ENCODE measurements at regions of chr2 and their contacts with region 1.

Region 1: DNA sequence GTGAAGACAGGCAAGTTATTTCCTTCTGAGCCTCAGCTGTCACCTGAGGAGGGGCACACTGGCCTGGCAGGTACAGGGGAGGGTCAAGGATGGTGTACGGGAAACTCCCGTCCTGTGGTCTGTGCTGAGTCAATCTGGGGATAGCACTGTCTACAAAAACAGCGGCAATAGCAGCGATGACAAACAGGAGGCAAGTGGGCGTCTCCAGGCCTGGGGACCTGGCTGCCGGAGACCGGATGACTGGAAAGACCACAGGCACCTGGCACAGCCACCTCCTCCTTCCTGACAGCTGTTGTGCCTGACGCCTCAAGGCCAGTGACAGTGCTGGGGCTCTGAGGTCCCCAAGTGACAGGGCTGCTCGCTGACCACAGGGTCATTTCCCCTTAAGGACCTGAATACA is 202.1 kb upstream of the HS6ST1 start:
- DNase-seq: peak; percentile 82
- H3K4me3 Mint-ChIP-seq: no peak overlapping the region
- H3K27ac Mint-ChIP-seq: peak overlapping the region; percentile 53
- H3K4me1 Mint-ChIP-seq: peaks cover 14% of the 10 kb centered on the region
- H3K27me3 Mint-ChIP-seq: peaks cover 2% of the 10 kb centered on the region

Region 2: DNA sequence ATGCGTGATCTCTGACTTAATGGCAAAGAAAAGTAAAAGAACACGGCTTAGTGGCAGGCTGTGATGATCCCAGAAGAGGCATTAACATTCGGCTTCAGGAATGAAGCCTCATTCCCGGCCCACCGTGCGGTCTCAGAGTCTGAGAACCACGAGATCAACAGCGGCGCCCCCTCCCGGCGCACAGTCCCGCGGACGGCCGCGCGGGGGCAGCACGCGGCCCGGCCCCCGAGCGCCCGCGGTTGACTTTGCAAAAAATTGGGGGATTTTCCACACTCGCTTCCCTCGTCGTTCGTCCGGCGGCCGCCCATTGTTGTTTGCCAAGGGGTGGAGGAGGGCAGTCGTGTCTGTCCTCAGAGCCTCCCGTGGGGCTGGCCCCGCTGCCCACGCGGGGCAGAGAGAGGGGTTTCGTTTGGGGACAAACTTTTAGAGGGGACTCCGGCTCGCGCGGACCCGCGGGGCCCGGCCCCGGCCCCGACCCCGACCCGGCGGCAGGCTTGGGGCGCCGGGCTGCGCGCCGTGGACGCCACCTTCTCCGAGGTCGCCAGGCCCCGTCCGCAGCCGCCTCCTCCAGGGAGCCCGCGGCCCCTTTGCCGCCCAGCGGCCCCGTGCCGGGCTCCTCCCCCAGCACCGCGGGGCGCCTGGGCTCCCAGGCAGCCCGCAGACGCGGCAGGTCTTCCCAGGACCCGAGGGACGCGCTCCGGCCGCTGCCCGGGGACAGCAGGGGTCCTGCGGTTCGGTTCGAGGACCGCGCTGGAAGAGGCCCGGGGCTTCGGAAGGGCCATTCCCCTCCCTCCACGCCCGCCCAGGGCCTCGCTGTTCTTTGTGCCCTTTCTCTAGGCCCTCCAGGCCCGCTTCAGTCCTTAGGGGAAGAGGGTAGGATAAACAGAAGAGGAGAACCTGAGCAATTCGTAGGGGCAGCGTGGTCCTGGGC is 198.7 kb before region 1 on chr2:
- intact Hi-C with region 1: loop called (anchors 5 kb)
- DNase-seq: peak; percentile 95
- H3K4me3 Mint-ChIP-seq: peak overlapping the region; percentile 64
- H3K27ac Mint-ChIP-seq: peak overlapping the region; percentile 80
- H3K4me1 Mint-ChIP-seq: peaks cover 11% of the 10 kb centered on the region
- H3K27me3 Mint-ChIP-seq: peaks cover 8% of the 10 kb centered on the region

Region 3: DNA sequence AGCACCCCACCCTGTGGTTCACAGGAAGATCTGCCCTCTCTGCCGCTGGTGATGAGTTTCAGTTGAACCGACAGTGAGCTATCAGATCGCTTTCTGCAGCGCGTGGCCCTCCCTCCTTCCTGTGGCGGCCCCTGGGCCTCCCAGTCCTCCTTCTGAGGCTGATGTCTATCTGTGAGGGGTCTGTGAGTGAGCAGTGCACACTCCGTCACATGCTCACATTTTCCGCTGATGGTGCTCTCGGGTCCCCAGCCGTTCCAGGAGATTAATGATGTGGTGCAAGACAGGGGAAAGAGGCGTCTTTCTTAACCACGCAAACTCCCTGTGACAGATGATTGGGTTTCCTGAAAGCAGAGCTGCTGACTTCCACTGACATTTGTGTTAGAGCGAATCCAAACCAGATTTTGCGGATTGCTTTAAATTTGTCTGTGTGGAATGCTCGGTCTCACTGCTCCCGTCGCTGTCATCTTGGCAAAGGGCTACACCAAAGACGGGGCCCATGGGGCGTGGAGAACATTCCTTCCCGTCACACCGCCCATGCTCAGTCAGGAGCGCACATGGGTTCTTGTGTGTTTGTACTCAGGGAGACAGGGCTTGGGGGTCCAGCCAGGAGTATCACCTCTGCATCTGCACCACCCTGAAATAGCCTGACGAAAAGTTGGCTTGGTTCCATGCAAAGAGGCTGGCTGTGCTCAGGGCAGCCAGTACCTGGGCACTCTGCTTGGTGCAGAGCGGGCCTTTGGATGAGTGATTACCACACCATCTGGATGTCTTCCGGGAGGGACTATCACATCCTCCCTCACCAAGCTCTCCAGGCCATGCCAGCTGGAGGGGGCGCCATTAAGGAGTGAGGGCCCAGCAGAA is 47.4 kb before region 1 on chr2:
- intact Hi-C with region 1: loop called (anchors 2 kb)
- DNase-seq: peak; percentile 77
- H3K4me3 Mint-ChIP-seq: peak overlapping the region; percentile 76
- H3K27ac Mint-ChIP-seq: peak overlapping the region; percentile 83
- H3K4me1 Mint-ChIP-seq: peaks cover 11% of the 10 kb centered on the region
- H3K27me3 Mint-ChIP-seq: peaks cover 6% of the 10 kb centered on the region

Region 4: GRCh38 chr2:128536925-128537620 is 16.3 kb after region 1 on chr2:
- intact Hi-C with region 1: loop called (anchors 1 kb)
- DNase-seq: no peak
- H3K4me3 Mint-ChIP-seq: no peak overlapping the region
- H3K27ac Mint-ChIP-seq: peak overlapping the region; percentile 67
- H3K4me1 Mint-ChIP-seq: peaks cover 10% of the 10 kb centered on the region
- H3K27me3 Mint-ChIP-seq: peaks cover 10% of the 10 kb centered on the region

Region 5: GRCh38 chr2:128552806-128553551 is 32.2 kb after region 1 on chr2:
- intact Hi-C with region 1: loop called (anchors 2 kb)
- DNase-seq: no peak
- H3K4me3 Mint-ChIP-seq: no peak overlapping the region
- H3K27ac Mint-ChIP-seq: no peak overlapping the region
- H3K4me1 Mint-ChIP-seq: no peaks in the 10 kb centered on the region
- H3K27me3 Mint-ChIP-seq: no peaks in the 10 kb centered on the region

Region 6: GRCh38 chr2:128573116-128573515 is 52.3 kb after region 1 on chr2:
- intact Hi-C with region 1: no loop called
- DNase-seq: no peak
- H3K4me3 Mint-ChIP-seq: no peak overlapping the region
- H3K27ac Mint-ChIP-seq: no peak overlapping the region
- H3K4me1 Mint-ChIP-seq: no peaks in the 10 kb centered on the region
- H3K27me3 Mint-ChIP-seq: peaks cover 14% of the 10 kb centered on the region

Region 7: DNA sequence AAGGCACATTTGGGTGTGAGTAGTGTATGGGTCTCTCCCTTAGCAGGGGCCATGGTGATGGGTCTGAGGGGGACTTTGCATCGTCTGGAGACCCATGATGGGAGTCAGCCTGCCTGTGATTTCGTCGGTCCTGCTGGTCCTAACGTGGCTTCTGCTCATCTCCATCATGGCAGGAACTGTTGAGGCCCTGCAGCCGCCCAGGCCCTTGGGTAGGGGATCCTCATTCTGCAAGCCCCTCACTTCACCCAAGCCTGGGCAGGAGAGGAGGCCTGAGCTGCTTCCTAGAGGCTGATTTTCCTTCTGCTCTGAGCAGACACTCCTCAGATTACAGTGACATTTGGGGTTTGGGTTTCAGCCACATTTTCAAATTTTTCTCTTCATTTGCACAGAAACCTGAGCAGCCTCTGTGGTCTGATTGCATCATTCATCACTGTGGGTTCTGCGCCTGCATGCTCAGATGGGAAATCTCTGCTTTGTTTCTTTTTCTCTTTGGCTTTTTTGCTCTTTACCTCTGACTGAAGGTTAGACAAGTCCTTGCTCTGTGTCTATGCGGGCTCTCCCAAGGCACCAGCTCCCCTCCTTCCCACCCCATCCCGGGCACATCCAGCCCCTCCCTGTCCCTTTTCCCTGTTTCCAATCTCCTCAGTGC is 103.1 kb after region 1 on chr2:
- intact Hi-C with region 1: loop called (anchors 5 kb)
- DNase-seq: peak; percentile 79
- H3K4me3 Mint-ChIP-seq: peak overlapping the region; percentile 58
- H3K27ac Mint-ChIP-seq: no peak overlapping the region
- H3K4me1 Mint-ChIP-seq: peaks cover 13% of the 10 kb centered on the region
- H3K27me3 Mint-ChIP-seq: peaks cover 43% of the 10 kb centered on the region

Region 8: GRCh38 chr2:128686497-128686859 is 165.7 kb after region 1 on chr2:
- intact Hi-C with region 1: no loop called
- DNase-seq: peak; percentile 70
- H3K4me3 Mint-ChIP-seq: peak overlapping the region; percentile 13
- H3K27ac Mint-ChIP-seq: no peak overlapping the region
- H3K4me1 Mint-ChIP-seq: peaks cover 9% of the 10 kb centered on the region
- H3K27me3 Mint-ChIP-seq: peaks cover 4% of the 10 kb centered on the region

Region 9: GRCh38 chr2:128921751-128922150 is 401.0 kb after region 1 on chr2:
- intact Hi-C with region 1: no loop called
- DNase-seq: no peak
- H3K4me3 Mint-ChIP-seq: no peak overlapping the region
- H3K27ac Mint-ChIP-seq: no peak overlapping the region
- H3K4me1 Mint-ChIP-seq: no peaks in the 10 kb centered on the region
- H3K27me3 Mint-ChIP-seq: no peaks in the 10 kb centered on the region

Region 10: GRCh38 chr2:129087133-129087818 is 566.5 kb after region 1 on chr2:
- intact Hi-C with region 1: no loop called
- DNase-seq: no peak
- H3K4me3 Mint-ChIP-seq: no peak overlapping the region
- H3K27ac Mint-ChIP-seq: no peak overlapping the region
- H3K4me1 Mint-ChIP-seq: no peaks in the 10 kb centered on the region
- H3K27me3 Mint-ChIP-seq: peaks cover 4% of the 10 kb centered on the region

Measured in activated CD4-positive, alpha-beta T cell treated with anti-CD3 and anti-CD28 coated beads, Interleukin-2, amount 10 ng/mL, durations not matched to agents 24 days and 14 days (primary cell).